Astrocyte of the cerebellum (primary cell): ENCODE measurements at regions of chr17 and their contacts with region 1.

Region 1: GRCh38 chr17:16886655-16887322 is 85.1 kb downstream of the TNFRSF13B start:
- DNase-seq: no peak
- H3K4me3 ChIP-seq: no peak overlapping the region
- CTCF ChIP-seq: no peak

Region 2: DNA sequence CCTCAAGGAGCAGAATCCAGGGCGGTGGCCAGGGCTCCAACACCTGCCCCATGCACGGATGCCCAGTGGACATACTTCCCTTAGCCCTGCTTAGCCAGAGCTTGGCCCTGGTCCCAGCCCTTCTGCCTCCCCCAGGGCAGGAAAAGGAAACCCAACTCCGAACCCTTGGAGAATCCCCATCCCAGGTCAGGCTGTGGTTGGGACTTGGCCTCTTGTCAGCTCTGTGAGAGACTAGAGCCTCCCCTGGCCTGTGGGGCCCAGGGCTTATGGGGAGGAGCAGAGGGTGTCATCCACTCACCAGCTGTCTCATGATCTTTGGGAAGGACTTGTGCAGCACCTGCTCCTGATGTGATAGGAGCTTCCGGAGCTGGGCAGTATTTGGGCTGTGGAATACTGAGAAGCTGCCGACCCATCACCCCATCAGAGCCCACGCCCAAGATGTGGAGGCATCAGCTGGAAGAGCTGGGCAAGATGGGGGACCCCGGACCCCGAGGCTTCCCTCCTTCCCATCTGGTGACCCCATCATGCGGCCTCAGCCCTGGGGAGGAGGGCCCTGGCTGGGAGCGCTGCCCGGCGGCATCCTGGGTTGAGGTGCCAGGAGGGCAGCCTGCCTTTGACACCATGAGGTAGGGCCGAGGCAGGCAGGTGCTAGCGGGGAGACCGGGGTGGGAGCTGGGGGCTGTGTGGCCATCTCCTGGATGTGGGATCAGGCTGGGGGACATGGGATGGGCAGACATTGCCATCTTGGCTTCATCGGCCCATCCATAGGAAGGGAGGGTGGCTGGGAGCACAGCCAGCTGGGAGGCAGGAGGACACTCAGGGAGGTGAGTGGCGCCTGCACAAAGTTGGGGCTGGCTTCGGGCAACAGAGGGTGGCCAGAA is 40.0 kb after region 1 on chr17:
- in situ Hi-C with region 1: no loop called
- DNase-seq: no peak
- H3K4me3 ChIP-seq: no peak overlapping the region
- CTCF ChIP-seq: no peak

Region 3: DNA sequence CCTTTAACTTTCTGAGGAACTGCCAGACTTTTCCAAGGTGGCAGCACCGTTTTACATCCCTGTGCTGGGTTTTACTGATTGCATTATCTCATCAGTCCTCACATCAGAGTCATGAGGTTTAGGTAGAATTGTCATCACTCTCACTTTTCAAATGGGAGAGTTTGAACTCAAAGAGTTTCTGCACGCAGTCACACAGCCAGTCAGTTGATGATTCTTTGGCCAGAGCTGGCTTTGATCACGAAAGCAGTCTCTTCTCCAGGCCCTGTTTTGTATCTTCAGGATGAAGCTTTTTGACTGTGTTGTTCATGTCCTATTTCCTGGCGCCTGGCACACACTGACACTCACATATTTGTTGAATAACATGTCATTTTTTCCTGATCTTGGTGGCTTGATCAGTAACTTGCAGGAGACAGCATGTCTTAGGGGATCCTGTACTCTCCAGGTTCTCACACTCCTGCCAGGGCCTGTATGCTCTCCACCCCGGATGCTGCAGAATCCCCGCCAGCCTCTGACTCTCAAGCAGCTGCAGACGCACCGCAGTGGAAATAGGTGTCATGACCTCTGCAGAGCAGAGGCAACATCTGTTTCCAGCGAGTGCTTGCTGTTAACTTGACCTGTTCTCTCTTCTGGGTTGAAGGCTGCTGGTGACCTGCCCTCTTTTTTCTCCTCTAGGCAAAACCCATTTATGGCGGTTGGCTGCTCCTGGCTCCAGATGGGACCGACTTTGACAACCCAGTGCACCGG is 188.4 kb after region 1 on chr17:
- in situ Hi-C with region 1: loop called (anchors 25 kb)
- DNase-seq: no peak
- H3K4me3 ChIP-seq: no peak overlapping the region
- CTCF ChIP-seq: no peak